ENCODE measurements at regions of chr2 and their contacts with region 1.

Region 1: GRCh38 chr2:215793747-215794595 is 219.4 kb downstream of the MREG start:
- DNase-seq: peak; percentile 52
- H3K4me3 Mint-ChIP-seq: no peak overlapping the region
- H3K27ac Mint-ChIP-seq: no peak overlapping the region
- H3K4me1 Mint-ChIP-seq: peaks cover 9% of the 10 kb centered on the region
- H3K27me3 Mint-ChIP-seq: no peaks in the 10 kb centered on the region

Region 2: DNA sequence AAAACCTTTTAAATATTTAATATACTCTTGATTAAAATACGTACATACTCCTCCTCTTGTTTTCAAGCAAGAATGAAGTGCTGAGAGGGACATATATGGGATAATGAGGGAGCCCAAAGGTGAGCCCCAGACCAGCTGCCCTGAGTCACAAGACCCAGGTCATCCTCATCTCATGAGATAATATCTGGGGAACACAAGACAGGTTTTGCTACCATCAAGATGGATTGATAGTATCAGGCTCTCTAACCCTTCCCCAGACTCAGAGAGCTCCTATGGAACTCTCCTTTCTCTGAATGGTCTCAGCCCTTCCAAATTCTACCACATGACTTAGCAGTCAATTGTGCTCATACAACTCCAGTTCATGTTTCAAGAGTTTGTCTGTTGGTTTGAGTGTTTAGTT is 30.0 kb before region 1 on chr2:
- CTCF ChIA-PET with region 1: no interaction called
- POLR2A ChIA-PET with region 1: no interaction called
- intact Hi-C with region 1: loop called (anchors 2 kb)
- DNase-seq: no peak
- H3K4me3 Mint-ChIP-seq: no peak overlapping the region
- H3K27ac Mint-ChIP-seq: no peak overlapping the region
- H3K4me1 Mint-ChIP-seq: peaks cover 15% of the 10 kb centered on the region
- H3K27me3 Mint-ChIP-seq: peaks cover 5% of the 10 kb centered on the region

Region 3: DNA sequence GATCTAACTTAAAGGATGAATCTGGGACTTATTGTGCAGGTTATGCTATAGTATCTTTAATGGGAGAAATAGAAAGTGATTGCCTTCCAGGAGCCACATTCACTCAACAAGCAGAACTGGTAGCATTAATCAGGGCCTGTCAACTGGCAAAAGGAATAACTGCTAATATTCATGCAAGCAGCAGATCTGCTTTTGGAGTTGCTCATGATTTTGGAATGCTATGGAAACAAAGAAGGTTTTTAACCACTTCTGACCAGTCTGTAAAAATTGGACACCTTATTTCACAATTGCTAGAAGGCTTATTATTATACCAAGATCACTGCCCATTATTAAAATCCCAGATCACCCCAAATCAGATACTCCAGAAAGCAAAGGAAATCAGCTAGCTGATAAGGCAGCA is 19.0 kb after region 1 on chr2:
- CTCF ChIA-PET with region 1: no interaction called
- POLR2A ChIA-PET with region 1: no interaction called
- intact Hi-C with region 1: no loop called
- DNase-seq: no peak
- H3K4me3 Mint-ChIP-seq: no peak overlapping the region
- H3K27ac Mint-ChIP-seq: no peak overlapping the region
- H3K4me1 Mint-ChIP-seq: peaks cover 15% of the 10 kb centered on the region
- H3K27me3 Mint-ChIP-seq: peaks cover 5% of the 10 kb centered on the region

Measured in activated CD4-positive, alpha-beta memory T cell treated with anti-CD3 and anti-CD28 coated beads for 36 hours (primary cell).